ENCODE measurements at regions of chr21 and their contacts with region 1.

Region 1: DNA sequence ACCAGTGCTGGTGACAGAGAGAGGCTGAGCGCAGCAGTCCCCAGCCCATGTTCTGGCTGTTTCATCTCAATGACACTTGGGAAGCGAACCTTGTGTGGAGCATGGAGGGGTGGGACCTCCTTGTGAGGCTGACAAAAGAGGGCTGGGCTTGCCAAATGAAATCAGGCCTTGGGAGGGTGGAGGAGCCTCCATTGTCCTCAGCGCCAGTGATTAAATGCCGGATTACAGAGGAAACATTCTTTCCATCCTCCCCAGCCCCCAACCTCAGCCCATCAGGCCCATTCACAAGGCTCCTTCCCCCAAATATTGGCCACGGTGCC is 63.3 kb upstream of the PAXBP1 start:
- DNase-seq: peak in 22 of 42 donors; percentile 6 to 65 (median 28)

Region 2: DNA sequence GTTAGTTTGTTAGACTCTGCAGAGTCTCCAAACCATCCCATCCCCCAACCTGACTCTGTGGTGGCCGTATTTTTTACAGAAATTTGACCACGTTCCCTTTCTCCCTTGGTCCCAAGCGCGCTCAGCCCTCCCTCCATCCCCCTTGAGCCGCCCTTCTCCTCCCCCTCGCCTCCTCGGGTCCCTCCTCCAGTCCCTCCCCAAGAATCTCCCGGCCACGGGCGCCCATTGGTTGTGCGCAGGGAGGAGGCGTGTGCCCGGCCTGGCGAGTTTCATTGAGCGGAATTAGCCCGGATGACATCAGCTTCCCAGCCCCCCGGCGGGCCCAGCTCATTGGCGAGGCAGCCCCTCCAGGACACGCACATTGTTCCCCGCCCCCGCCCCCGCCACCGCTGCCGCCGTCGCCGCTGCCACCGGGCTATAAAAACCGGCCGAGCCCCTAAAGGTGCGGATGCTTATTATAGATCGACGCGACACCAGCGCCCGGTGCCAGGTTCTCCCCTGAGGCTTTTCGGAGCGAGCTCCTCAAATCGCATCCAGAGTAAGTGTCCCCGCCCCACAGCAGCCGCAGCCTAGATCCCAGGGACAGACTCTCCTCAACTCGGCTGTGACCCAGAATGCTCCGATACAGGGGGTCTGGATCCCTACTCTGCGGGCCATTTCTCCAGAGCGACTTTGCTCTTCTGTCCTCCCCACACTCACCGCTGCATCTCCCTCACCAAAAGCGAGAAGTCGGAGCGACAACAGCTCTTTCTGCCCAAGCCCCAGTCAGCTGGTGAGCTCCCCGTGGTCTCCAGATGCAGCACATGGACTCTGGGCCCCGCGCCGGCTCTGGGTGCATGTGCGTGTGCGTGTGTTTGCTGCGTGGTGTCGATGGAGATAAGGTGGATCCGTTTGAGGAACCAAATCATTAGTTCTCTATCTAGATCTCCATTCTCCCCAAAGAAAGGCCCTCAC is 190.9 kb after region 1 on chr21 and contains the start of gene OLIG2:
- intact Hi-C with region 1: loop called (anchors 10 kb)
- DNase-seq: peak; percentile 88 to 99 (median 96)

Region 3: GRCh38 chr21:33127154-33127893 is 292.4 kb after region 1 on chr21:
- intact Hi-C with region 1: loop called (anchors 10 kb)
- DNase-seq: peak; percentile 42 to 95 (median 86)

Region 4: DNA sequence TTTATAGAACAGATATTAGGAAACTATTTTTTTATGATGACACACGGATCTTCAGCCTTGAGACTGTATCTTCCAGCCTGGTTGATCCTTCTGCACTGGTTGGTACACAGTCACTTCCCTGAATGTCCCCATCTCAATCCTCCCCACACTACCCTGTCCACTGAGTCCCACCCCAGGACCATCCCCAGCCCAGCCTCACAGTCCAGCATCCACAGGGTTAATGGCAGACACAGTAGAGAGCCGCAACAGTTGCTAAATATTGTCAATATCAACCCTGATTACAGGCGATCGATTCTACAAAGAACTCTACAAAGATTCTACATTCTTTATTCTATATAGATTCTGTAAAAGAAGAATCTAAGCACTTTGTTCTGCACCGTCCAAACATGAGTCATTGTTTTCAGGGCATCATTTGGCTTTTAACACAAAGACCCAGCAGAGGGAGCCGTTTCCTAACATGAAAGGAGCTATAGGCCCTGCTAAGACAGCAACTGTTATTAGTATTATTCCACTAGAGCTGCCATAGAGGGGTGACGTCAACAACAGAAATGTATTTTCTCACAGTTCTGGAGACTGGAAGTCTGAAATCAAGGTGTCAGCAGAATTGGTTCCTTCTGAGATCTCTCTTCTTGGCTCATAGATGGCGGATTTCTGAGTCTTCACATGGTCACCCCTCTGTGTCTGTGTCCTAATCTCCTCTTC is 364.8 kb after region 1 on chr21:
- intact Hi-C with region 1: loop called (anchors 5 kb)
- DNase-seq: peak in 41 of 42 donors; percentile 42 to 95 (median 83)

Region 5: DNA sequence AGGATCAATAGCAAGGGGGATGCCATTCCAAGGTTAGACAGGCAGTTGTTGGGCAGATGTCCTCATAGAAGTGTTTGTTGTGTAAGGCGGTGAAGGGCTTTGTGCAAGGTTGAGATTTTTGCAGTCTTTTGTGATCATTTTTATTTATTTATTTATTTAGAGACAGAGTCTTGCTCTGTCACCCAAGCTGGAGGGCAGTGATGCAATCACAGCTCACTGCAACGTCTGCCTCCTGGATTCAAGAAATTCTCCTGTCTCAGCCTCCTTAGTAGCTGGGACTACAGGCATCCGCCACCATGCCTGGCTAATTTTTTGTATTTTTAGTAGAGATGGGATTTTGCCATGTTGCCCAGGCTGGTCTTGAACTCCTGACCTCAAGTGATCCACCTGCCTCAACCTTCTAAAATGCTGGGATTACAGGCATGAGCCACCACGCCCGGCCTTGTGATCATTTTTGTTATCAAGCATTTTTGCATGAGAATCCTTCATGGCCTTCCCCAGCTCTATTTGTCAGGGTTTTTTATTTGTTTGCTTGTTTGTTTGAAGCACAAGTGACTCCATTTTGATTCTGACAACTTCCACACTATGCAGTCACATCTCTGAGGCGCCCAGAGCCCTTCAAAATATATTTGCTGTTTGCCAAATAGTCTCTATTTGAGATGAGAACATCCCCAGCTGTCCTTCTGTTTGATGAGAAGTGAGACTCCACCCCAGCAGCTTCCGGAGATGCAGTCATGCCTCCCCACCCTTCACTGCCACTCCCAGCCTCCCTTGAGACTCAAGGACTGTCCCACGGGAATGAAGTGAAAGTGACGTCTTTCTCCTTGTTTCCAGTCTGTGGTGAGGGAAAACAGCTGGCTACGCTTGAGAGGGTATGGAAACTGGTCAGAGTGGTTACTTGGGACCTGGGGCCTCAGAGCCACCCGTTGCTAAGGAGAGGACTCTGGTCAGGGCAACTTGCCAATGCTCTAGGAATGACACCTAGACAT is 606.9 kb after region 1 on chr21:
- intact Hi-C with region 1: loop called (anchors 10 kb)
- DNase-seq: peak in 13 of 42 donors; percentile 13 to 55 (median 27)